OCI-LY7 (cell line): ENCODE measurements at regions of chr19 and their contacts with region 1.

Region 1: GRCh38 chr19:42433503-42434260 is 6.5 kb upstream of the LIPE start:
- DNase-seq: peak; percentile 74
- H3K4me3 ChIP-seq: no peak overlapping the region
- H3K27ac ChIP-seq: no peak overlapping the region
- H3K4me1 ChIP-seq: peaks cover 15% of the 10 kb centered on the region
- CTCF ChIP-seq: peak; percentile 95

Region 2: GRCh38 chr19:42420055-42420544 is 13.6 kb before region 1 on chr19:
- CTCF ChIA-PET with region 1: no interaction called
- POLR2A ChIA-PET with region 1: interaction called, 8 read pairs
- intact Hi-C with region 1: loop called (anchors 1 kb)
- DNase-seq: peak; percentile 86
- H3K4me3 ChIP-seq: no peak overlapping the region
- H3K27ac ChIP-seq: peak overlapping the region; percentile 2
- H3K4me1 ChIP-seq: peaks cover 46% of the 10 kb centered on the region
- CTCF ChIP-seq: peak; percentile 99

Region 3: GRCh38 chr19:42512743-42513304 is 79.1 kb after region 1 on chr19:
- CTCF ChIA-PET with region 1: no interaction called
- POLR2A ChIA-PET with region 1: no interaction called
- intact Hi-C with region 1: no loop called
- DNase-seq: peak; percentile 56
- H3K4me3 ChIP-seq: no peak overlapping the region
- H3K27ac ChIP-seq: peak overlapping the region; percentile 26
- H3K4me1 ChIP-seq: peaks cover 34% of the 10 kb centered on the region
- CTCF ChIP-seq: no peak